WTC11 (cell line): ENCODE measurements at regions of chr14 and their contacts with region 1.

Region 1: GRCh38 chr14:88380405-88380804 is 5.1 kb upstream of the SPATA7 start:
- DNase-seq: no peak
- ATAC-seq: peak; percentile 43
- H3K4me3 Mint-ChIP-seq: no peak overlapping the region
- H3K27ac Mint-ChIP-seq: no peak overlapping the region
- H3K4me1 Mint-ChIP-seq: peaks cover 15% of the 10 kb centered on the region
- H3K27me3 Mint-ChIP-seq: peaks cover 12% of the 10 kb centered on the region
- CTCF ChIP-seq: no peak

Region 2: GRCh38 chr14:88013750-88014349 is 366.6 kb before region 1 on chr14:
- CTCF ChIA-PET with region 1: interaction called, 11 read pairs
- POLR2A ChIA-PET with region 1: no interaction called
- DNase-seq: peak; percentile 67
- ATAC-seq: peak; percentile 97
- H3K4me3 Mint-ChIP-seq: no peak overlapping the region
- H3K27ac Mint-ChIP-seq: no peak overlapping the region
- H3K4me1 Mint-ChIP-seq: peaks cover 10% of the 10 kb centered on the region
- H3K27me3 Mint-ChIP-seq: no peaks in the 10 kb centered on the region
- CTCF ChIP-seq: peak; percentile 77

Region 3: DNA sequence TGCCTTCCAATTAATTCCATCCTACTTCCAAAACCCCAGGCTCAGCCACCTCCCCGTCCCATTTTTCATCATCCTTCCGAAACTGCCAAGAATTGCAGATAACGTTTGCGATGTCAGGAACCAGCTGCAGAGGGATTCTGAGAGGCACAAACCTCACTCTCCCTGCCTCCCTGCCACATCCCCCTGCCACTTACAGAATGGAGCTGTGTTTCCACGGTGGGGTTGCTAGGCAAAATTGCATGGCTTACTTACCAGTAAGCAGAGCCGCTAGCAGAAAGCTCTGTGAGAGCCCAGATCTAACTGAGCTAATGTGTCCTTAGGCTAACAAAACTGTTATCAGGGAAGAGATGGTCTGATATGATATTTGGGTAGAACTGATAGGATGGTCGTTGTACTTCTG is 184.7 kb before region 1 on chr14:
- CTCF ChIA-PET with region 1: interaction called, 19 read pairs
- POLR2A ChIA-PET with region 1: no interaction called
- DNase-seq: peak; percentile 28
- ATAC-seq: peak; percentile 68
- H3K4me3 Mint-ChIP-seq: no peak overlapping the region
- H3K27ac Mint-ChIP-seq: no peak overlapping the region
- H3K4me1 Mint-ChIP-seq: peaks cover 36% of the 10 kb centered on the region
- H3K27me3 Mint-ChIP-seq: no peaks in the 10 kb centered on the region
- CTCF ChIP-seq: no peak

Region 4: DNA sequence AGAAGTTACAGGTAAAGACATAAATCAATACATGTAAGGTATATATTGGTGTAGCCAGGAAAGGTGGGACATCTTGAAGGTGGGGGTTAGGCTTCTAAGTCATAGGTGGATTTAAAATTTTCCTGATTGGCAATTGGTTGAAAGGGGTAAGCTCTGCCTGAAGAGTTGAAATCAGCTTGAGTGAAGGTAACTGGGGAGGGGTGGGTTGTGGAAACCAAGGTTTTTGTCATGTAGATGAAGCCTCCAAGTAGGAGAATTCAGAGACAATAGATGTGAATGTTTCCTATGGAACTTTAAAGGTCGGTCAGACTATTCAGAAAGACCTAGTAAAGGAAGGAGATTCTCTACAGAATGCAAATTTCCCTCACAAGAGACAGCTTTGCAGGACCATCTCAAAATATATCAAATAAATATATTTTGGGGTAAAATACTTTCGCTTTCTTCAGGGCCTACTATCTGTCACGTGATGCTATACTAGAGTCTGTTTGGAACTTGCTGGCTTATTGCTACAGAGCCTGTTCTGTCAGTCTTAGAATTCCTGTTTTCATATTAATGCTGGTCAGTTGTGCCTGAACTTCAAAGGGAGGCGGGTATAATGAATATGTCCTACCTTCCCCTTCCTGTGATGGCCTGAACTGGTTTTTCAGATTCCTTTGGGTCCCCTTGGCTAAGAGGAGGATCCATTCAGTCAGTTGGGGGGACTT is 15.5 kb before region 1 on chr14:
- CTCF ChIA-PET with region 1: interaction called, 15 read pairs
- POLR2A ChIA-PET with region 1: interaction called, 4 read pairs
- DNase-seq: peak; percentile 28
- ATAC-seq: peak; percentile 91
- H3K4me3 Mint-ChIP-seq: peak overlapping the region; percentile 41
- H3K27ac Mint-ChIP-seq: peak overlapping the region; percentile 97
- H3K4me1 Mint-ChIP-seq: peaks cover 51% of the 10 kb centered on the region
- H3K27me3 Mint-ChIP-seq: no peaks in the 10 kb centered on the region
- CTCF ChIP-seq: no peak